Sigmoid colon (tissue), 7 donors: ENCODE measurements at regions of chr11 and their contacts with region 1.

Region 1: GRCh38 chr11:73661035-73661628 is 14.8 kb downstream of the PLEKHB1 start:
- DNase-seq: peak; percentile 92
- H3K4me3 ChIP-seq: peak overlapping the region; percentile 8 to 46 (median 32)
- H3K27ac ChIP-seq: peak overlapping the region; percentile 16 to 63 (median 35)
- H3K4me1 ChIP-seq: peaks cover 2 to 15% (median 11%) of the 10 kb centered on the region in 4 donors
- H3K27me3 ChIP-seq: no peaks in the 10 kb centered on the region
- CTCF ChIP-seq: peak; percentile 93 to 98 (median 96)
- EP300 ChIP-seq: no peak
- POLR2A ChIP-seq: no peak

Region 2: DNA sequence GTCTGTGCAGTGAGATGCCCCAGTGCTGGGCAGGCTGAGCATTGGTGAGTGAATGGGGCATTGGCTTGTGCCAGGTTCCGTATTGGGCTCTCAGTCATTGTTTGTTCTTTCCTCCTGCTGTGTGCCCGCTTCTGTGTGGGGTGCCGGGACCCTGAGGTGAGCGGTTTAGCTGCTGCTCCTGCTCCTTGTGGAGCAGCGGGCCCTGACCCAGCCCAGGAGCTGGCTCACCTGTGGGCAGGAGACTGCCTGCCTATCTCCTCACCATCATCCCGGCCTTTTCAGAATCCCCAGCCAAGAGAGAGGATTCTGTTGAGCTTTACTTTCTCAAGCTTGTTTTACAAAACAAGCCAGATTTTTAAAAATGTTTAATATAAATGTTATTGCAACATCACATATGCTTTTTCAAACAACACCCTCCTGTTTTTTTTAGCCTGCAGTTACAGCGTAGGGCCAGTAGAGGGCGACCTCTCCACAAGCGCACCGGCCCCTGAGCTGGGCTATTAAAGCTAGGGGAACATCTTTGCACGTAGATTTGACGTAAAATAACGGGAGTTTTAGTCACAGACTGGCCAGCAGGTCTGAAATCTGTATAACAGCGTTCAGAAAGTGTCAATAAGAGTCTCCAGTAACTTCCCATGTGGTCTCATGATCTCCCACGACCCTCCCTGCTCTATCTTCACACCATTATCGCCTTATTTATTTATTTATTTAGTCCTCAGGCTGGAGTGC is 310.1 kb before region 1 on chr11:
- intact Hi-C with region 1: loop called (anchors 1 kb)
- DNase-seq: peak; percentile 79
- H3K4me3 ChIP-seq: no peak overlapping the region
- H3K27ac ChIP-seq: peak overlapping the region in 3 of 4 donors; percentile 48 to 59 (median 55)
- H3K4me1 ChIP-seq: peaks cover 0 to 25% (median 9%) of the 10 kb centered on the region in 4 donors
- H3K27me3 ChIP-seq: no peaks in the 10 kb centered on the region
- CTCF ChIP-seq: peak; percentile 78 to 94 (median 86)
- EP300 ChIP-seq: no peak
- POLR2A ChIP-seq: no peak

Region 3: GRCh38 chr11:73402834-73403185 is 258.3 kb before region 1 on chr11:
- intact Hi-C with region 1: loop called (anchors 2 kb)
- DNase-seq: no peak
- H3K4me3 ChIP-seq: no peak overlapping the region
- H3K27ac ChIP-seq: no peak overlapping the region
- H3K4me1 ChIP-seq: peaks cover 0 to 7% (median 0%) of the 10 kb centered on the region in 4 donors
- H3K27me3 ChIP-seq: no peaks in the 10 kb centered on the region
- CTCF ChIP-seq: no peak
- EP300 ChIP-seq: no peak
- POLR2A ChIP-seq: no peak

Region 4: GRCh38 chr11:73469401-73469800 is 191.7 kb before region 1 on chr11:
- intact Hi-C with region 1: no loop called
- DNase-seq: no peak
- H3K4me3 ChIP-seq: no peak overlapping the region
- H3K27ac ChIP-seq: peak overlapping the region in 1 of 4 donors; percentile 58
- H3K4me1 ChIP-seq: peaks cover 0 to 34% (median 16%) of the 10 kb centered on the region in 4 donors
- H3K27me3 ChIP-seq: no peaks in the 10 kb centered on the region
- CTCF ChIP-seq: no peak
- EP300 ChIP-seq: peak in 1 of 4 donors; percentile 10
- POLR2A ChIP-seq: no peak

Region 5: GRCh38 chr11:73625696-73626318 is 35.3 kb before region 1 on chr11:
- intact Hi-C with region 1: loop called (anchors 1 kb)
- DNase-seq: peak; percentile 86
- H3K4me3 ChIP-seq: peak overlapping the region in 3 of 4 donors; percentile 7 to 18 (median 12)
- H3K27ac ChIP-seq: no peak overlapping the region
- H3K4me1 ChIP-seq: peaks cover 0 to 8% (median 4%) of the 10 kb centered on the region in 4 donors
- H3K27me3 ChIP-seq: peaks cover 0 to 10% (median 0%) of the 10 kb centered on the region in 3 donors
- CTCF ChIP-seq: peak; percentile 63 to 91 (median 89)
- EP300 ChIP-seq: no peak
- POLR2A ChIP-seq: no peak

Region 6: DNA sequence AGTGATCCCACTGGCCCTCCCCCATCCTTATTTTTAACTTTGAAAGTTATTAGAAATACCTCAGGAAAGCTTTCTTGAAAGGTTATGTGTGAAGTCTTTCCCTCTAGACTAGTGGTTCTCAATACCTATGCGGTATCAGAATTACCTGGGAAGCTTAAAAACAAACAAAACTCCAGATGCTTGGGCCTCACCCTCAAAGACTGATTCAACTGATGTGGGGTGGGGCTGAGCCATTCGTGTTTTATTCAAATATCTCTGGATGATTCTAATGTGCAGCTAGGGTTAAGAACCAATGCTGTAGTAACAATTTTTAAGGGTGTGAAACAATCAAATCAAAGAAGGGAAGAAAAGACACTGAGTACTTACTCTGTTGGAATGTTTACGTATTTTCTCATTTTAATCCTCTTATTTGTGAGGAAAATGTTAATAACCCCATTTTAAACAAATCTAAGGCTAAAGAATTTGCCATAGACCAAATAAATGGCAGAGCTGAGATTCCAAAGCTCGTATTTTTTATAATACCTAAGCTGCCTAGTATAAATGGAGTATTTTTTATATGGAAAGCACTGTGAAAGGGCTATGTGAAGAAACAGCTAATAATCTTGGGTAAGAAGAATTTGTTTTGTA is 32.9 kb after region 1 on chr11:
- intact Hi-C with region 1: no loop called
- DNase-seq: no peak
- H3K4me3 ChIP-seq: no peak overlapping the region
- H3K27ac ChIP-seq: no peak overlapping the region
- H3K4me1 ChIP-seq: no peaks in the 10 kb centered on the region
- H3K27me3 ChIP-seq: no peaks in the 10 kb centered on the region
- CTCF ChIP-seq: no peak
- EP300 ChIP-seq: no peak
- POLR2A ChIP-seq: no peak

Region 7: DNA sequence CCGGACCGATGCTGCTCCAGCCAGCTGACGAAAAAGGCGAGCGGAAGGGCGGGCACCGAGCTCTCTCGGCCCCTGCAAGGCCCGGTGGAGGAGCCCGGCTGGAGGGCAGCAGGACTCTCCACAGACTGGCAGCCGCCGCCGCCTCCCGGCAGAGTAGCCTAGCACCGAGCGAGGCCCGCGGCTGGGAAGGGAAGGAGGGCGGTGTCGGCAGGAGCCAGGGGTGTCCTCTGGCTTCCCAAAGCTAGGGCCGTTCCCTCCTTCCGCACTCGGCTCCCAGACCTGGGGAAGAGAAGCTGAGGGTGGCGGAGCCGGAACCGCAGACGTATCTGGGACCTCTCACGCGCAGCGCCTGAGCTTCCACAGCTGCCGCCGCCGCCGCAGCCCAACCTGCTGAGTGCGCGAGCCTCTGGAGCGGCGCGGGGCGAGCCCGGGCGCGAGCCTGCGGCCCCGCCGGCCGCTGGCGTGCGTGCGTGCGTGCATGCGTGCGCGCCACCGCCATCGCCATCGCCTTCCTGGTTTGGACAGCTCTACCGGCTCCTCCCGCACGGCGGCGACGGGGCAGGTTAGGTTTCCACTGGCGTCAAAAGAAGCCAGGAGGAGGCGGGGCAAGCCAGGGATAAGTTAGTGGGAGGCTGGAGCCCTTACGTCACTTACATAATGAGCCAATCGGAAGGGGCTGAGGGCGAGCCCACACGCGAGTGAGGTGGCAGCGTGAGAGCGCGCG is 99.7 kb after region 1 on chr11 and contains the start of gene RAB6A:
- intact Hi-C with region 1: no loop called
- DNase-seq: peak; percentile 100
- H3K4me3 ChIP-seq: peak within 1 kb of the TSS; percentile 72 to 95 (median 82)
- H3K27ac ChIP-seq: peak within 1 kb of the TSS; percentile 97 to 100 (median 98)
- H3K4me1 ChIP-seq: peaks cover 0 to 33% (median 30%) of the 10 kb centered on the region in 4 donors
- H3K27me3 ChIP-seq: no peaks in the 10 kb centered on the region
- CTCF ChIP-seq: peak in 3 of 4 experiments; percentile 22 to 32 (median 26)
- EP300 ChIP-seq: peak in 1 of 4 donors; percentile 38
- POLR2A ChIP-seq: peak; percentile 68 to 82
- total RNA-seq, gene RAB6A: 110 to 162 (median 140) TPM

Region 8: GRCh38 chr11:74069147-74070047 is 408.3 kb after region 1 on chr11:
- intact Hi-C with region 1: no loop called
- DNase-seq: no peak
- H3K4me3 ChIP-seq: no peak overlapping the region
- H3K27ac ChIP-seq: no peak overlapping the region
- H3K4me1 ChIP-seq: no peaks in the 10 kb centered on the region
- H3K27me3 ChIP-seq: no peaks in the 10 kb centered on the region
- CTCF ChIP-seq: no peak
- EP300 ChIP-seq: no peak
- POLR2A ChIP-seq: no peak